A673 (cell line): ENCODE measurements at regions of chr1 and their contacts with region 1.

Region 1: GRCh38 chr1:155001675-155002463 is 733 bp upstream of the ZBTB7B start:
- DNase-seq: peak; percentile 99
- H3K4me3 ChIP-seq: peak overlapping the region; percentile 85
- H3K27ac ChIP-seq: peak overlapping the region; percentile 94
- H3K4me1 ChIP-seq: peaks cover 20% of the 10 kb centered on the region
- H3K27me3 ChIP-seq: no peaks in the 10 kb centered on the region
- CTCF ChIP-seq: peak; percentile 49; the same call in 1 of the 2 replicates

Region 2: GRCh38 chr1:154857441-154858215 is 144.2 kb before region 1 on chr1:
- CTCF ChIA-PET with region 1: no interaction called
- POLR2A ChIA-PET with region 1: interaction called, 13 read pairs
- intact Hi-C with region 1: no loop called
- DNase-seq: no peak
- H3K4me3 ChIP-seq: no peak overlapping the region
- H3K27ac ChIP-seq: no peak overlapping the region
- H3K4me1 ChIP-seq: peaks cover 8% of the 10 kb centered on the region
- H3K27me3 ChIP-seq: no peaks in the 10 kb centered on the region
- CTCF ChIP-seq: no peak

Region 3: GRCh38 chr1:154896771-154897391 is 105.0 kb before region 1 on chr1:
- CTCF ChIA-PET with region 1: no interaction called
- POLR2A ChIA-PET with region 1: no interaction called
- intact Hi-C with region 1: no loop called
- DNase-seq: no peak
- H3K4me3 ChIP-seq: no peak overlapping the region
- H3K27ac ChIP-seq: peak overlapping the region; percentile 47
- H3K4me1 ChIP-seq: peaks cover 19% of the 10 kb centered on the region
- H3K27me3 ChIP-seq: no peaks in the 10 kb centered on the region
- CTCF ChIP-seq: no peak

Region 4: DNA sequence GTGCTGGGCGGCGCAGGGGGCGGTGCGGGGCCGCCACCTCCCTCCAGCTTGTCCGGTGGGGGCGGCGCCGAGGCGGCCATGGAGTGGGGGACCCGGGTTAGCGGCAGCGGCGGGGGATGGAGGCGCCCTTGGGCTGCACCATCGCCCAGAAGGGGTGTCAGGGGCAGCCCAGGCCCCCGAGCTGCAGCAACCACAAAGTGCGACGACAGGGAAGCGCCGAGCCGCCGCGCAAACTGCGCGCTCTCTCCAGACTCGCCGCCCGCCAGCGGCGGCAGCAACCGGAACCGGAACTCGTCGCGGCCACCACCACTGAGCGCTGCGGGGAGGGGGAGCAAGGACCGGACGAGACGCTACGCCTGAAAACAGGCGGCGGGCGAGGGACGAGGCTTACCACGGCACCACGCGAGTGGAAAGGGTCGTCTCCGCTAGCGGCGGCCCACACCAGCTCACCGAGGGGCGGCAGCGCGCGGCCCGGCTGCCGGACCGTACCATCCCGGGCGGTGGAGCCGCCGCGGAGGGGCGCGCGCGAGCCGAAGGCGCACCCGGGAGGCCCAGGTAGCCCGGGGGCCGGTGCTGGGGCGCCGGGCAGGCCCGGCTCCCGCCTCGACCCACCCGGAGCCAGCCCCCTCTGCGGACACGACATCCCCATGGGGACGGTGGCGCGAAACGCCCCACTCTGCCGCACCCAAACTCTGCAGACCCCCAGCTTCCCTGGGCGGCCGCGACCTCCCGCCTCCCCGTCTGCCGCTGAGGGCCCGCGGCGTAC is 40.2 kb before region 1 on chr1 and contains the start of gene PYGO2:
- CTCF ChIA-PET with region 1: interaction called, 17 read pairs
- POLR2A ChIA-PET with region 1: no interaction called
- intact Hi-C with region 1: loop called (anchors 5 kb)
- DNase-seq: peak; percentile 90
- H3K4me3 ChIP-seq: peak within 1 kb of the TSS; percentile 97
- H3K27ac ChIP-seq: peak within 1 kb of the TSS; percentile 99
- H3K4me1 ChIP-seq: peaks cover 18% of the 10 kb centered on the region
- H3K27me3 ChIP-seq: no peaks in the 10 kb centered on the region
- CTCF ChIP-seq: peak; percentile 66
- total RNA-seq, gene PYGO2: 46.3 and 48.5 TPM in 2 replicates

Region 5: GRCh38 chr1:155050560-155051341 is 48.9 kb after region 1 on chr1 and contains the start of gene ADAM15:
- CTCF ChIA-PET with region 1: interaction called, 10 read pairs
- POLR2A ChIA-PET with region 1: interaction called, 4 read pairs
- intact Hi-C with region 1: no loop called
- DNase-seq: peak; percentile 80
- H3K4me3 ChIP-seq: peak within 1 kb of the TSS; percentile 89
- H3K27ac ChIP-seq: peak within 1 kb of the TSS; percentile 47
- H3K4me1 ChIP-seq: peaks cover 20% of the 10 kb centered on the region
- H3K27me3 ChIP-seq: no peaks in the 10 kb centered on the region
- CTCF ChIP-seq: peak; percentile 98
- total RNA-seq, gene ADAM15: 36.3 and 48.5 TPM in 2 replicates